CD4-positive, alpha-beta memory T cell (primary cell): ENCODE measurements at regions of chr1 and their contacts with region 1.

Region 1: GRCh38 chr1:206982216-206982615 is 12.0 kb upstream of the FCAMR start:
- DNase-seq: peak; percentile 50 to 60 (median 53)
- H3K4me3 ChIP-seq: no peak overlapping the region
- H3K4me3 Mint-ChIP-seq: no peak overlapping the region
- H3K27ac ChIP-seq: no peak overlapping the region
- H3K27ac Mint-ChIP-seq: no peak overlapping the region
- H3K4me1 ChIP-seq: no peaks in the 10 kb centered on the region
- H3K4me1 Mint-ChIP-seq: no peaks in the 10 kb centered on the region
- H3K27me3 ChIP-seq: no peaks in the 10 kb centered on the region
- H3K27me3 Mint-ChIP-seq: peaks cover 12 to 17% of the 10 kb centered on the region in 2 donors

Region 2: DNA sequence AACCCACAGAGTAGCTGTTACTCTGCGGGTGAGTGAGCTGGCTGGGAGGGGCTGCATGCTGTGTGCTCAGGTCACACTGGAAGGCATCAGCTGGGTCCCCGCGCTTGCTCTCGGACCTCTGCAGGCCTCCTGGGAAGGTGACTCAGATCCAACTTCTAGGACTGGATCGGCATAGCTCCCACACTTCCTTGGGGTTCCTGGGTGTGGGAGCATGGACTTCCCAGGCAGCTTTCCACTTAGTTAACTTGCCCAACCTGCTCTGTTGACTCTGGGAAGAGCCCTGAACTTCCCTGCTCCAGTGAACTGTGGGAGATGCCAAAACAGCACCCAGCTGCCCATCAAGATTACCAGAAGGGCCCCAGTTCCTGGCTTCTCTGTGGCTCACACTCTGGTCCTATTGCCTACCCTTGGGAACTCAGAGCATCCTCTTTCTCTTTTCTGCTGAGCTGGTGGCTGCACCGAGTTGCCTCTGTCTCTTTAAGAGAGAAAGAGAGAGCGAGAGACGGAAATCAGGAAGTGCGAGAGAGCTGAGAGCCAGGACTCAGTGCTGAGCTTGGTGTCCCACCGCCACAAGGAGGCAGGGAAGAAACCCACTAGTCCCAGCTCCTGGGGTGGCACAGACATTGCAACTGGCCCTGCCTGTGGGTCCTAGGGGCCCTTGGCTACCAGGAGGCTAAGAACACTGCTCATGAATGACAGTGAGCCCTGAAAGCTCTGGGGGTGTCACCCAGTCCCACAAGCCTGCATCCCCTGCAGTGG is 512.1 kb before region 1 on chr1 and contains the start of gene IKBKE:
- CTCF ChIA-PET with region 1: no interaction called
- POLR2A ChIA-PET with region 1: no interaction called
- intact Hi-C with region 1: loop called (anchors 10 kb)
- DNase-seq: peak; percentile 44 to 69 (median 47)
- H3K4me3 ChIP-seq: peak within 1 kb of the TSS; percentile 99
- H3K4me3 Mint-ChIP-seq: peak within 1 kb of the TSS; percentile 84 to 97 (median 93)
- H3K27ac ChIP-seq: peak within 1 kb of the TSS; percentile 80
- H3K27ac Mint-ChIP-seq: peak within 1 kb of the TSS; percentile 64 to 95 (median 92)
- H3K4me1 ChIP-seq: peaks cover 86% of the 10 kb centered on the region
- H3K4me1 Mint-ChIP-seq: peaks cover 54 to 91% (median 79%) of the 10 kb centered on the region in 4 donors
- H3K27me3 ChIP-seq: no peaks in the 10 kb centered on the region
- H3K27me3 Mint-ChIP-seq: no peaks in the 10 kb centered on the region
- total RNA-seq, gene IKBKE: 81.8 to 92.3 TPM

Region 3: GRCh38 chr1:206658264-206658980 is 323.8 kb before region 1 on chr1:
- CTCF ChIA-PET with region 1: interaction called, 9 read pairs
- POLR2A ChIA-PET with region 1: no interaction called
- intact Hi-C with region 1: loop called (anchors 1 kb)
- DNase-seq: peak in 4 of 5 donors; percentile 42 to 51 (median 44)
- H3K4me3 ChIP-seq: no peak overlapping the region
- H3K4me3 Mint-ChIP-seq: no peak overlapping the region
- H3K27ac ChIP-seq: no peak overlapping the region
- H3K27ac Mint-ChIP-seq: no peak overlapping the region
- H3K4me1 ChIP-seq: peaks cover 10% of the 10 kb centered on the region
- H3K4me1 Mint-ChIP-seq: peaks cover 0 to 2% (median 1%) of the 10 kb centered on the region in 4 donors
- H3K27me3 ChIP-seq: peaks cover 3% of the 10 kb centered on the region
- H3K27me3 Mint-ChIP-seq: peaks cover 19 to 27% of the 10 kb centered on the region in 2 donors

Region 4: DNA sequence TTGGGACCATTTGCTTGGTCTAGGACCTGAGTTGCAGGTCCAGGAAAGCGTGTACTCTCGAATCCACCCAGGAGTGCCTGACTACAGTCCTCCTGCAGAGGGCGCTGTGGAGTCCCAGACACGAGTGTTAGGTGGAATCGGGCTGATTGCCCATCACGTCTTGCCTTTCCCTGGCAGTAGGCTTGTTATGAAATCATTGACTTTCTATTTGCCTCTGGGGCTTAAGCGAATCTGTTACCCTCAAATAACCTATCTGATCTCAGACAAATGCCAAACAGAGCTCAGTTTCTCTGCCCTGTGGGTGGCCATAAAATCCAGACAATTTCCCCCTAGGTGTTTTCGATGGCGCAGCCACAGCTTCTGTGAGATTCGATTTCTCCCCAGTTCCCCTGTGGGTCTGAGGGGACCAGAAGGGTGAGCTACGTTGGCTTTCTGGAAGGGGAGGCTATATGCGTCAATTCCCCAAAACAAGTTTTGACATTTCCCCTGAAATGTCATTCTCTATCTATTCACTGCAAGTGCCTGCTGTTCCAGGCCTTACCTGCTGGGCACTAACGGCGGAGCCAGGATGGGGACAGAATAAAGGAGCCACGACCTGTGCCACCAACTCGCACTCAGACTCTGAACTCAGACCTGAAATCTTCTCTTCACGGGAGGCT is 117.1 kb before region 1 on chr1 and contains the start of gene IL20:
- CTCF ChIA-PET with region 1: interaction called, 32 read pairs
- POLR2A ChIA-PET with region 1: no interaction called
- intact Hi-C with region 1: loop called (anchors 1 kb)
- DNase-seq: peak; percentile 73 to 79 (median 77)
- H3K4me3 ChIP-seq: no peak within 1 kb of the TSS
- H3K4me3 Mint-ChIP-seq: peak within 1 kb of the TSS in 1 of 8 donors; percentile 6
- H3K27ac ChIP-seq: no peak within 1 kb of the TSS
- H3K27ac Mint-ChIP-seq: peak within 1 kb of the TSS in 2 of 7 donors; percentile 15 to 55
- H3K4me1 ChIP-seq: no peaks in the 10 kb centered on the region
- H3K4me1 Mint-ChIP-seq: peaks cover 0 to 5% (median 4%) of the 10 kb centered on the region in 4 donors
- H3K27me3 ChIP-seq: no peaks in the 10 kb centered on the region
- H3K27me3 Mint-ChIP-seq: peaks cover 16% of the 10 kb centered on the region in 2 donors
- total RNA-seq, gene IL20: not detected

Region 5: GRCh38 chr1:206962272-206962671 is 19.9 kb before region 1 on chr1:
- CTCF ChIA-PET with region 1: interaction called, 11 read pairs
- POLR2A ChIA-PET with region 1: no interaction called
- intact Hi-C with region 1: no loop called
- DNase-seq: no peak
- H3K4me3 ChIP-seq: no peak overlapping the region
- H3K4me3 Mint-ChIP-seq: no peak overlapping the region
- H3K27ac ChIP-seq: no peak overlapping the region
- H3K27ac Mint-ChIP-seq: peak overlapping the region in 2 of 7 donors; percentile 20 to 21
- H3K4me1 ChIP-seq: peaks cover 15% of the 10 kb centered on the region
- H3K4me1 Mint-ChIP-seq: peaks cover 11 to 18% (median 14%) of the 10 kb centered on the region in 4 donors
- H3K27me3 ChIP-seq: no peaks in the 10 kb centered on the region
- H3K27me3 Mint-ChIP-seq: no peaks in the 10 kb centered on the region

Region 6: GRCh38 chr1:206992790-206993189 is 10.6 kb after region 1 on chr1:
- CTCF ChIA-PET with region 1: interaction called, 29 read pairs
- POLR2A ChIA-PET with region 1: no interaction called
- intact Hi-C with region 1: no loop called
- DNase-seq: no peak
- H3K4me3 ChIP-seq: no peak overlapping the region
- H3K4me3 Mint-ChIP-seq: no peak overlapping the region
- H3K27ac ChIP-seq: no peak overlapping the region
- H3K27ac Mint-ChIP-seq: no peak overlapping the region
- H3K4me1 ChIP-seq: no peaks in the 10 kb centered on the region
- H3K4me1 Mint-ChIP-seq: no peaks in the 10 kb centered on the region
- H3K27me3 ChIP-seq: no peaks in the 10 kb centered on the region
- H3K27me3 Mint-ChIP-seq: peaks cover 10 to 15% of the 10 kb centered on the region in 2 donors